ENCODE measurements at regions of chr19 and their contacts with region 1.

Region 1: DNA sequence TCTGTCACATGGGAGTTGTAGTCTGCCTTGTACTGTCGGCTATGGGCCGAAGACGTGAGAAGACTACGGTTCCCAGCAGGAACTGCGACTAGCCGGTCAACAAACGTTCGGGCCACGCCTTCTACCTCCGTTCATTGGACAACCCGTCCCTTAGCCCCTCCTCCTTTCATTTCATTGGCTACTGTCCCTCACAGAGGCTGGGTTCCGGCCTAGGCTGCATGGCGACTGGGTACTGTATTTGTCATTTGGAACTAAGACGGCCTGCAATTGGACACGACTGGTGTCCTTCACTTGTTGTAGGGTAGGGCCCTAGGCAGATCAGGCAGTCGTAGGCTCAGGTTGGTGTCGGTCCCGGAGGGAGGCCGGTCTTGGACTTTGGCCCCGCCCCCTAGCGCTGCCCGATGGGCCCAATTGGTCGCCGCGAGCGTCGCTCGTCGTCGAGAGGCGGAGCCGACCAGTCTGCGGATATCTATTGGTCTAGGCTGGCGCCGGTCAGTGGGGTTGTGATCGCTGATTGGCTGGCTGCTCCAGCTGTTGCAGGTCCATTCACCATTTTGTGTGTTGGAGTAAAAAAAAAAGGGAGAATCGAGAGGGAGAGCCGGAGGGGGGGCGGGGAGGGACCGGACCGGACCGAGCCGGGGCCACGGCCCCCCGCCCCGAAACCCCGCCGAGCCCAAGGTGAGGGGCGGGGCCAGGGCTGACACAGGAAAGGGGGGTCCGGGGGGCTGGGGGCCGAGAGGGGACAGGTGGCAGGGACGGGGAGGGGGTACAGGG is at the start of gene CIC:
- DNase-seq: peak; percentile 99 to 100
- H3K4me3 ChIP-seq: peak within 1 kb of the TSS; percentile 74
- H3K4me3 Mint-ChIP-seq: no peak within 1 kb of the TSS
- H3K27ac Mint-ChIP-seq: no peak within 1 kb of the TSS
- H3K4me1 ChIP-seq: peaks cover 10% of the 10 kb centered on the region; the same call in 1 of the 2 replicates
- H3K4me1 Mint-ChIP-seq: no peaks in the 10 kb centered on the region
- H3K27me3 ChIP-seq: no peaks in the 10 kb centered on the region
- H3K27me3 Mint-ChIP-seq: no peaks in the 10 kb centered on the region
- CTCF ChIP-seq: no peak
- total RNA-seq, gene CIC: 44.8 and 47.8 TPM in 2 replicates

Region 2: DNA sequence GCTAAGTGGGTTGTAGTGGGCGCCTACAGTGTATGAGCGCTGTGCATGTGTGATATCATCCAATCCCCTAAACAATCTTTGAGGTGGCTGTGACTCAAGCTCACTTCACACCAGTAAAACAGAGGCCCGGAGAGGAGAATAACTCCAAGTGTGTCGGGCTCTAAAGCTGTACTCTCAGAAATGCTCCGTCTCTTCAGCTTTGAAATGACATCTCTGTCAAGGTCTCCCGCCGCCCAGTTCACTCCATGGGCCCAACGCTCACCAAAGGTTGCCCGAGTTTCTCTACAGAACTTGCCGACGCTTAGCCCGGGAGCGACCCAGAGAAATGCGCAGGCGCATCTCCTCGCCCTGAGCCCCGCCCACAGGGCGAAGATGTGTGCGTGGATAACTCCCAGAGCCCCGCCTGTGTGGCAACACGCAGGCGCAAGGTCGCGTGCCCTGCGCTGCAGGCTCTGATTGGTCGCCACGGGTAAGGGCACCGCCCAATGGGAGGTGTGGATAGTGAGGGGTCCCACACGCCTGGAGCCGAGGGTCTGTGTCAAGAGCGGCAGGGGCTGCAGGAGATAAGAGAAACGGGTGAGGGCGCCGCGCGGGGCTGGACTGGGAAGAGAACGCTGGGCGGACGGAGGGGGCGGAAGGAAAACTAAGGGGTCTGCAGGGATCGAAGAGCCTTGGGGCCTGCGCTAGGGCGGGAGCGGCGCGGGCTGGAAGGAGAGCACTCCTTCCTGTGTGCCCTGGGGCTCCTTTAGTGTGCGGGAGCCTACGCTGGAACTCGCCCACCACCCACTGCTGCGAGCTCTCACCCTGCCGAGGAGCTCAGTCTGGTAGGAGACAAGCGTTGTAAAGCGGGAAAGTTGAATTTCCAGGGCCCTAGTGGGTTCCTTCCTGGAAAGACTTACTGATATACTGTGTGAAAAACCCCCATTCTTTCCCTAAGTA is 48.8 kb before region 1 on chr19 and contains the start of gene ZNF526:
- CTCF ChIA-PET with region 1: no interaction called
- POLR2A ChIA-PET with region 1: no interaction called
- intact Hi-C with region 1: loop called (anchors 1 kb)
- DNase-seq: peak; percentile 99
- H3K4me3 ChIP-seq: peak within 1 kb of the TSS; percentile 79
- H3K4me3 Mint-ChIP-seq: peak within 1 kb of the TSS; percentile 93
- H3K27ac Mint-ChIP-seq: peak within 1 kb of the TSS; percentile 94
- H3K4me1 ChIP-seq: peaks cover 25% of the 10 kb centered on the region
- H3K4me1 Mint-ChIP-seq: peaks cover 22% of the 10 kb centered on the region
- H3K27me3 ChIP-seq: no peaks in the 10 kb centered on the region
- H3K27me3 Mint-ChIP-seq: no peaks in the 10 kb centered on the region
- CTCF ChIP-seq: peak in 1 of 2 experiments; percentile 2
- total RNA-seq, gene ZNF526: 19.4 and 22.6 TPM in 2 replicates

Region 3: DNA sequence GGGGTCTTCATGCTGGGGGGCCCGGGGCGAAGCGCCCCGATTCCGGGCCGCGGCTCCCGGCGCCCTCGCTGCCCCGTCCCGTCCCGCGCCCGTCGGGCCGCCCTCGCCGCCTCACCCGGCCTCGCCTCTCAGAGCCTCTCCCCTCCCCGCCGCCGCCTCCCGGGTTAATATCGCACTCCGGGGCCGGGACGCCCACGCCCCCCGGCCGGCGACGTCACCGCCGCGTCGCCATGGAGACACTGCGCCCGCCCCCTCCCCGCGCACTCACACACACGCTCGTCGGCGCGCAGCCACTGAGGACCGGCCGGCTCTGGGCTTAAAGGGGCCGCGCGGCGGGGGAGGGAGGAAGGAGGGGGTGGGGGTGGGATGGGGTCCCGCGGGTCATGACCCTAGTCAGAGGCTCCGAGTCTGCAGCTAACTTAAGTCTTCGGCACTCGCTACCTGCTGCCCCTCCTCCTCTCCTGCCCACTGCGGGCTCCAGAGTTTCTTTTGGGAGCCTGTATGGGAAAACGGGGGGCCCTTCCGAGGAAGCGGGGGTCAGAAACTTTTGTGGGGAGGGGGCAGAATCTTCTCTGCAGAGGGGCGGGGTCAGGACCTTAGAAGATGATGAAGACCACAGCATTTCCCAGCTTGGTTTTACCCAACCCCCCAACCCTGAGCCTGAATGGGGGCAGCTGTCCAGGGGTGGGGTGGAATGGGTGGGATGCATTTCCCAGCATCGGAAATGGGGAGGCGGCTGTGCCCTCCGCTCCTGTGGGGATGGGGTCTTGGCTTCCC is 13.7 kb before region 1 on chr19 and contains the start of gene ERF:
- CTCF ChIA-PET with region 1: no interaction called
- POLR2A ChIA-PET with region 1: interaction called, 4 read pairs
- intact Hi-C with region 1: loop called (anchors 1 kb)
- DNase-seq: peak; percentile 93 to 97
- H3K4me3 ChIP-seq: peak within 1 kb of the TSS; percentile 74
- H3K4me3 Mint-ChIP-seq: peak within 1 kb of the TSS; percentile 87
- H3K27ac Mint-ChIP-seq: peak within 1 kb of the TSS; percentile 89
- H3K4me1 ChIP-seq: peaks cover 21% of the 10 kb centered on the region
- H3K4me1 Mint-ChIP-seq: peaks cover 21% of the 10 kb centered on the region
- H3K27me3 ChIP-seq: no peaks in the 10 kb centered on the region
- H3K27me3 Mint-ChIP-seq: no peaks in the 10 kb centered on the region
- CTCF ChIP-seq: no peak
- total RNA-seq, gene ERF: 134 and 149 TPM in 2 replicates

Region 4: GRCh38 chr19:42283143-42284065 is 14.5 kb after region 1 on chr19:
- CTCF ChIA-PET with region 1: interaction called, 5 read pairs
- POLR2A ChIA-PET with region 1: no interaction called
- intact Hi-C with region 1: loop called (anchors 1 kb)
- DNase-seq: peak; percentile 95 to 98
- H3K4me3 ChIP-seq: peak overlapping the region; percentile 79
- H3K4me3 Mint-ChIP-seq: no peak overlapping the region
- H3K27ac Mint-ChIP-seq: no peak overlapping the region
- H3K4me1 ChIP-seq: peaks cover 40% of the 10 kb centered on the region
- H3K4me1 Mint-ChIP-seq: peaks cover 29% of the 10 kb centered on the region
- H3K27me3 ChIP-seq: no peaks in the 10 kb centered on the region
- H3K27me3 Mint-ChIP-seq: no peaks in the 10 kb centered on the region
- CTCF ChIP-seq: no peak

Region 5: GRCh38 chr19:42301656-42302203 is 32.8 kb after region 1 on chr19 and contains the start of gene PRR19:
- CTCF ChIA-PET with region 1: no interaction called
- POLR2A ChIA-PET with region 1: no interaction called
- intact Hi-C with region 1: loop called (anchors 1 kb)
- DNase-seq: no peak
- H3K4me3 ChIP-seq: peak within 1 kb of the TSS; percentile 64
- H3K4me3 Mint-ChIP-seq: peak within 1 kb of the TSS; percentile 98
- H3K27ac Mint-ChIP-seq: peak within 1 kb of the TSS; percentile 94
- H3K4me1 ChIP-seq: peaks cover 10% of the 10 kb centered on the region
- H3K4me1 Mint-ChIP-seq: peaks cover 14% of the 10 kb centered on the region
- H3K27me3 ChIP-seq: no peaks in the 10 kb centered on the region
- H3K27me3 Mint-ChIP-seq: no peaks in the 10 kb centered on the region
- CTCF ChIP-seq: no peak
- total RNA-seq, gene PRR19: 2.8 and 2.9 TPM in 2 replicates

Region 6: GRCh38 chr19:42313096-42313839 is 44.4 kb after region 1 on chr19 and contains the start of gene TMEM145:
- CTCF ChIA-PET with region 1: no interaction called
- POLR2A ChIA-PET with region 1: no interaction called
- intact Hi-C with region 1: no loop called
- DNase-seq: peak; percentile 62 to 83
- H3K4me3 ChIP-seq: peak within 1 kb of the TSS; percentile 48
- H3K4me3 Mint-ChIP-seq: peak within 1 kb of the TSS; percentile 66
- H3K27ac Mint-ChIP-seq: no peak within 1 kb of the TSS
- H3K4me1 ChIP-seq: 0 out of 2 replicates have a peak, but pooled peaks cover 5% of the 10 kb centered on the region
- H3K4me1 Mint-ChIP-seq: no peaks in the 10 kb centered on the region
- H3K27me3 ChIP-seq: no peaks in the 10 kb centered on the region
- H3K27me3 Mint-ChIP-seq: peaks cover 11% of the 10 kb centered on the region
- CTCF ChIP-seq: peak in 1 of 2 experiments; percentile 14
- total RNA-seq, gene TMEM145: 2.2 and 2.5 TPM in 2 replicates

Measured in Caco-2 (cell line).